MCF 10A (cell line): ENCODE measurements at regions of chr1 and their contacts with region 1.

Region 1: DNA sequence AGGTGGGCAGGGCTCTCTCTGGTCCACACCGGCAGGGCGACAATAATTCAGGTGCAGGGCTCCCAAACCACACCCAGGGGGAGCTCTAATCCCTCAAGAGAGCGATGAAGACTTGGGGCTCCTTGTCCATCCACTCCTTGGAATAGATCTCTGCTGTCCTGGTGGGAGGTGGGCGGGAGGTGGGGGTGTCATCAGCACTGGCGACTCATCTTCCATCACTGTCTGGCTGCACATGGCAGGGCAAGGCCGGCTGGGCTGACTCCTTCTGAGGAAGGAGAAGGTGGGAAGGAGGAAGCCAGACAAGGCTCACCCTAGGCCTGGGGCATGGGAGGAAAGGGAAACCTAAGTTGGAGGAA is 29.3 kb downstream of the TNNT2 start:
- DNase-seq: peak; percentile 92
- H3K4me3 Mint-ChIP-seq: no peak overlapping the region
- H3K27ac Mint-ChIP-seq: no peak overlapping the region
- H3K4me1 Mint-ChIP-seq: peaks cover 24% of the 10 kb centered on the region
- H3K27me3 Mint-ChIP-seq: peaks cover 10% of the 10 kb centered on the region
- CTCF ChIP-seq: peak; percentile 92

Region 2: GRCh38 chr1:201268604-201269151 is 79.5 kb before region 1 on chr1:
- CTCF ChIA-PET with region 1: interaction called, 182 read pairs
- POLR2A ChIA-PET with region 1: interaction called, 36 read pairs
- intact Hi-C with region 1: no loop called
- DNase-seq: peak; percentile 99
- H3K4me3 Mint-ChIP-seq: no peak overlapping the region
- H3K27ac Mint-ChIP-seq: peak overlapping the region; percentile 89
- H3K4me1 Mint-ChIP-seq: peaks cover 48% of the 10 kb centered on the region
- H3K27me3 Mint-ChIP-seq: no peaks in the 10 kb centered on the region
- CTCF ChIP-seq: no peak

Region 3: DNA sequence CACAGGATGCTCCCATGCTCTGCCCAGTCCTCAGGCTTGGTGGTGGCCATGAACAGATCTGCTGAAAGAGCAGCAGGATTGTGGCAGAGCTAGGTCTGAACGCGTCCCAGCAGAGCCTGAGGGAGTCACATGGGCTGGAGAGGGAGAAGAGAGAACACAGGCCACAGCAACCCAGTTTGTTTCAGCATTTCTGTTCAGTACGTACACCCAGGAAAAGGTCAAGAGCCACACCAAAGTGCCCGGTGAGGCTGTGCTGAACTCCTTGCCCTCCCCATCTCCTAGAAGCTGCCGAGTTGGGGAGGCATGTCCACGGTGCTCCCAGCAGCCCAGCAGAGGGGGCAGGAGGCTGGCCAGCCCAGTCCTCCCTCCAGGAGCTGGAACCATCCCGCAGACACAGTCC is 59.4 kb before region 1 on chr1:
- CTCF ChIA-PET with region 1: interaction called, 89 read pairs
- POLR2A ChIA-PET with region 1: interaction called, 159 read pairs
- intact Hi-C with region 1: no loop called
- DNase-seq: peak; percentile 64
- H3K4me3 Mint-ChIP-seq: peak overlapping the region; percentile 15
- H3K27ac Mint-ChIP-seq: peak overlapping the region; percentile 83
- H3K4me1 Mint-ChIP-seq: peaks cover 28% of the 10 kb centered on the region
- H3K27me3 Mint-ChIP-seq: no peaks in the 10 kb centered on the region
- CTCF ChIP-seq: peak; percentile 7

Region 4: GRCh38 chr1:201309426-201309825 is 38.8 kb before region 1 on chr1:
- CTCF ChIA-PET with region 1: interaction called, 445 read pairs
- POLR2A ChIA-PET with region 1: interaction called, 159 read pairs
- intact Hi-C with region 1: loop called (anchors 1 kb)
- DNase-seq: peak; percentile 98
- H3K4me3 Mint-ChIP-seq: peak overlapping the region; percentile 1
- H3K27ac Mint-ChIP-seq: peak overlapping the region; percentile 97
- H3K4me1 Mint-ChIP-seq: peaks cover 71% of the 10 kb centered on the region
- H3K27me3 Mint-ChIP-seq: no peaks in the 10 kb centered on the region
- CTCF ChIP-seq: peak; percentile 38

Region 5: DNA sequence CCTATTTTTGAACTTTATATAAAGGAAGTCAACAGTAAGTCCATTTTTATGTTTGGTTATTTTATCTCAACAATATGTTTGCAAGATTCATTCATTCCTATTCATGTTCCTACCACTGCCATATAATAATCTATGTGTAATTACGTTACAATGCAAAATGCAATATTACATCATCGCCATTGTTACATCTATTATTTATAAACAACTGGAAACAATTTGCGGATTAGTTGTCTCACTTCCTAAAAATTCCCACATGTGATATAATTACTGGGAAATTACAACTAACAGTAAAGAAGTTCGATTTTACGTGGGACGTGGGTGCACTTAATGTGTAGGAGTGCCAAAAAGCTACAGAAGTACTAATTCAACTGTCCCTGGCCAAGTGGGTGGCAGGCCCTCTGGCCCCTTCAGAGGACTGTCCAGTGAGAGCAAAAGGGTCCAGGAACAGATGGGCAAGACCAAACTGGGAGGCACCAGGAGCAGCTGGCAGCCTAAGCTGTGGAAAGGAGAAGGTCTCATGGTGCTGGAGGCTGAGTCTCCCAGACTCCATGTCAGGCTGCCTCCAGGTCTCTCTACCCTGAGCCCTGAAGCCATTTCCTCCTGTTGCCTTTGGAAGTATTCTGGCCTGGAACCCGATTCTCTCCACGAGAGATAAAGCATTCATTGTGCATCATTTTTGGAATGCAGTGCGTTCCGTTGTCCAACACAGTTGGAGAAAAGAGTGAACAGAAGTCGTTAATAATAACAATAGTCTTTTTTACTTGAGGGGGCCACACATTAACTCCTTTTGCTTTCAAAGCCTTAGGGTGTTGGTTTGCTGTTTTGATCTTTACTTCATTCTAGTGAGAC is 13.6 kb before region 1 on chr1:
- CTCF ChIA-PET with region 1: interaction called, 75 read pairs
- POLR2A ChIA-PET with region 1: interaction called, 4 read pairs
- intact Hi-C with region 1: no loop called
- DNase-seq: no peak
- H3K4me3 Mint-ChIP-seq: no peak overlapping the region
- H3K27ac Mint-ChIP-seq: no peak overlapping the region
- H3K4me1 Mint-ChIP-seq: peaks cover 11% of the 10 kb centered on the region
- H3K27me3 Mint-ChIP-seq: no peaks in the 10 kb centered on the region
- CTCF ChIP-seq: no peak

Region 6: GRCh38 chr1:201399352-201400126 is 51.4 kb after region 1 on chr1:
- CTCF ChIA-PET with region 1: interaction called, 16 read pairs
- POLR2A ChIA-PET with region 1: interaction called, 3 read pairs
- intact Hi-C with region 1: no loop called
- DNase-seq: peak; percentile 75
- H3K4me3 Mint-ChIP-seq: peak overlapping the region; percentile 66
- H3K27ac Mint-ChIP-seq: no peak overlapping the region
- H3K4me1 Mint-ChIP-seq: peaks cover 24% of the 10 kb centered on the region
- H3K27me3 Mint-ChIP-seq: no peaks in the 10 kb centered on the region
- CTCF ChIP-seq: no peak